Lower leg skin (tissue), 4 donors: ENCODE measurements at regions of chr4 and their contacts with region 1.

Region 1: GRCh38 chr4:98527534-98528269 is 130.7 kb downstream of the TSPAN5 start:
- DNase-seq: no peak
- H3K4me3 ChIP-seq: no peak overlapping the region
- CTCF ChIP-seq: no peak
- POLR2A ChIP-seq: no peak

Region 2: DNA sequence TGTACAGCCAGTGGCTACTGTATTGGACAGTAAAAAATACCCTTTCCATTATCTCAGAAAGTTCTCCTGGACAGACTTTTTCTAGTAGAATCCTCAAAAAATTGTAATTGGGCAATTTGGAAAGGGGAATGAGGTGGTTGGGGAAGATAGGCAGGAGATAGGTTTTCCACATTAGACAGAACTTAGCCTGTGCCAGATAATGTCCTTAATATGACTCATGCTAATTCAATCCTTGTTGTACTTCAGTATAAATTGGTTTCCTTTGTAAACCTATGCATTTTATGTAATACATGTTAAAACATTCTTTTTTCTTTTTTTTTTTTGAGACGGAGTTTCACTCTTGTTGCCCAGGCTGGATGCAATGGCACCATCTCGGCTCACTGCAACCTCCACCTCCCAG is 392.3 kb after region 1 on chr4:
- intact Hi-C with region 1: loop called (anchors 5 kb)
- DNase-seq: no peak
- H3K4me3 ChIP-seq: no peak overlapping the region
- CTCF ChIP-seq: no peak
- POLR2A ChIP-seq: no peak